A549 (cell line): ENCODE measurements at regions of chr11 and their contacts with region 1.

Region 1: DNA sequence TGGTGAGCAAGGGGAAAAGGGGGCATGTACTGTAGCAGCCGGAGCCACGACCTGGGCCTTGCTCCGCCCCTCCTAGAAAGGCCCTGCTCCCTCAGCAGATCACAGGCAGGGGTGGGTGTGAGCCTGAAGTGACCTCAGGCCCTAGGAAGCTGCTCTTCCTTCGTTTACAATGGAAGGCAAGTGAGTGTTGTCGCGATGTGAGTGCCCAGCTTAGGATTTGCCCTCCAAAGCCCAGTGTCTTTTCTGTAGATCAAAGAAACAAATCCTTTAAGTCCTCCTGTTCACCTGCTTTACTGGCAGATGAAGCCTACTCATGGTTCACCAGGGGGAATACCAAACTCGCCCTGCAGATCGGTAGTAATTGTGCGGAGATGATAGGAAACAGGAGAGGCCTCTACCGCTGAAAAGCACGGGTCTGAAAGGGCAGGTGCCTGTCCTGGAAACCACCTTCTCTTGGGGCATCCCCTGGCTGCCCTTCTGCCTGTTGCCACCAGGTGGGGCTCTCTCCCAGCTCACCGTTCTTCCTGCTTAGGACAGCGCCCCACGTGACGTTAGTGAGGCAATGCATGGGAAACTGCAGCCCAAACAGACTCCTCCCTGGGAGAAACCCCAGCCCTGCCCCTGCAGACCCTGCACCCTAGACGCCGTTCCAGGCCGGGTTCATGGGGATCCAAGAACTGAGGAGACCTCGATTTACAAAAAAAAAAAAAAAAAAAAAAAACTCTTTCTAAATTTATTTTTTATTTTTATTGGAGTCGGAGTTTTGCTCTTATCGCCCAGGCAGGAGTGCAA is 45.9 kb upstream of the RAB1B start:
- DNase-seq: peak; percentile 82 to 95
- ATAC-seq: peak; percentile 84 to 93
- H3K4me3 ChIP-seq: no peak overlapping the region
- H3K27ac ChIP-seq: peak overlapping the region; percentile 18 to 47; a peak in 4 of 6 replicates
- H3K4me1 ChIP-seq: peaks cover 14% of the 10 kb centered on the region; the same call in 1 of the 3 replicates
- CTCF ChIP-seq: peak; percentile 99
- EP300 ChIP-seq: no peak
- POLR2A ChIP-seq: no peak
- RAD21 ChIP-seq: peak; percentile 75 to 88

Region 2: GRCh38 chr11:66183494-66184048 is 39.0 kb before region 1 on chr11:
- CTCF ChIA-PET with region 1: interaction called, 13 read pairs
- POLR2A ChIA-PET with region 1: no interaction called
- DNase-seq: peak in 1 of 2 experiments; percentile 62
- ATAC-seq: peak; percentile 76 to 79; a peak in 5 of 6 replicates
- H3K4me3 ChIP-seq: no peak overlapping the region
- H3K27ac ChIP-seq: peak overlapping the region in 1 of 2 experiments; percentile 9; a peak in 1 of 6 replicates
- H3K4me1 ChIP-seq: peaks cover 30% of the 10 kb centered on the region
- CTCF ChIP-seq: no peak
- EP300 ChIP-seq: no peak
- POLR2A ChIP-seq: no peak
- RAD21 ChIP-seq: no peak

Region 3: GRCh38 chr11:66207876-66208275 is 14.7 kb before region 1 on chr11:
- CTCF ChIA-PET with region 1: interaction called, 19 read pairs
- POLR2A ChIA-PET with region 1: no interaction called
- DNase-seq: no peak
- ATAC-seq: no peak
- H3K4me3 ChIP-seq: no peak overlapping the region
- H3K27ac ChIP-seq: no peak overlapping the region
- H3K4me1 ChIP-seq: peaks cover 14% of the 10 kb centered on the region; the same call in 2 of the 3 replicates
- CTCF ChIP-seq: no peak
- EP300 ChIP-seq: no peak
- POLR2A ChIP-seq: no peak
- RAD21 ChIP-seq: no peak

Region 4: GRCh38 chr11:66261583-66261982 is 39.0 kb after region 1 on chr11:
- CTCF ChIA-PET with region 1: interaction called, 20 read pairs
- POLR2A ChIA-PET with region 1: no interaction called
- DNase-seq: no peak
- ATAC-seq: no peak
- H3K4me3 ChIP-seq: no peak overlapping the region
- H3K27ac ChIP-seq: no peak overlapping the region
- H3K4me1 ChIP-seq: peaks cover 13% of the 10 kb centered on the region
- CTCF ChIP-seq: no peak
- EP300 ChIP-seq: no peak
- POLR2A ChIP-seq: no peak
- RAD21 ChIP-seq: no peak

Region 5: GRCh38 chr11:66282468-66283386 is 60.2 kb after region 1 on chr11:
- CTCF ChIA-PET with region 1: interaction called, 20 read pairs
- POLR2A ChIA-PET with region 1: no interaction called
- DNase-seq: peak; percentile 89 to 96
- ATAC-seq: peak; percentile 58 to 89
- H3K4me3 ChIP-seq: no peak overlapping the region
- H3K27ac ChIP-seq: peak overlapping the region in 1 of 2 experiments; percentile 55; a peak in 2 of 6 replicates
- H3K4me1 ChIP-seq: peaks cover 32% of the 10 kb centered on the region
- CTCF ChIP-seq: peak; percentile 90
- EP300 ChIP-seq: no peak
- POLR2A ChIP-seq: no peak
- RAD21 ChIP-seq: peak; percentile 51 to 53

Region 6: GRCh38 chr11:66694732-66695207 is 472.2 kb after region 1 on chr11:
- CTCF ChIA-PET with region 1: no interaction called
- POLR2A ChIA-PET with region 1: no interaction called
- DNase-seq: peak; percentile 93 to 98
- ATAC-seq: peak; percentile 96 to 99
- H3K4me3 ChIP-seq: no peak overlapping the region
- H3K27ac ChIP-seq: peak overlapping the region; percentile 36 to 69; a peak in 3 of 6 replicates
- H3K4me1 ChIP-seq: peaks cover 5% of the 10 kb centered on the region; the same call in 1 of the 3 replicates
- CTCF ChIP-seq: peak; percentile 99
- EP300 ChIP-seq: no peak
- POLR2A ChIP-seq: no peak
- RAD21 ChIP-seq: peak; percentile 96 to 97